ENCODE measurements at regions of chr3 and their contacts with region 1.

Region 1: GRCh38 chr3:150183678-150184425 is 213.2 kb upstream of the PFN2 start:
- DNase-seq: peak; percentile 79
- H3K4me3 ChIP-seq: peak overlapping the region; percentile 29 to 46
- H3K27ac ChIP-seq: peak overlapping the region in 1 of 2 donors; percentile 23
- H3K4me1 ChIP-seq: peaks cover 4% of the 10 kb centered on the region
- H3K27me3 ChIP-seq: no peaks in the 10 kb centered on the region
- CTCF ChIP-seq: peak; percentile 39 to 56 (median 47)
- POLR2A ChIP-seq: no peak

Region 2: DNA sequence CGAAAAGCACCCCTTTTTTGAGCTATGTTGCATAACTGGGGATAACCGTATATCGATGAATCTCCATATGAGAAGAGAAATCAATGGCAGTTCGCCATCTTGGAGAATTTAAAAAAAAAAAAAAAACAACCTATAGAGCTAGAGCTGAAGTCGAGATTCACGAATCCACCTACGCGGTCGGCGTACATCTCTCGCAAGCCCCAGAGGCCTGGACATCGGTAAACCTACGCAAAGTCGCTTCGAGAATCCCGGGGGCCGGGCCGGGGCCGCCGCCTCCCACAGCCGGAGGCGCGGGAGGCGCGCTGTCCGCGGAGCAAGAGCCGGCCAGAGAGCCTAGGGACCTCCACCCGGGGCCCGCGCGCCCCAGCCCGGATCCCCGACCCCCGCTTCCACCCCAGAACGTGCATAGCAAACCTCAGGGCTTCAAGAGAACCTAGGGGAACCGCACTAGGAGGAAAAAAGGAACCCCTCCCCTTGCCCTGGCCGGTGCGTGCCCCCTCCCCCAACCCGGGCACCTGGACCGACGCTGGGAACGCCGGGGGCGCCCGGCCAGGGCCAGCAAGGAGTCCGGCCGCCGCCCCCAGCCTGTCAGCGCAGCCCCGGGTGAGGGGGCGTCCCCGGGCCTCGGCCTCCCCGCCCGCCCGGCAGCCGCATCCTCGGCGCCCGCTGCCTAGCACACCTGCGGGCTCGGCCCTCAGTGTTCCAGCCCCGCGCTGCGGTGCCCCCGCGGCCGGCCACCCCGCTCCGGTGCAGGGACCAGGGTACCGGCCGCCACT is 213.7 kb before region 1 on chr3:
- intact Hi-C with region 1: loop called (anchors 10 kb)
- DNase-seq: peak; percentile 93
- H3K4me3 ChIP-seq: peak overlapping the region; percentile 78 to 87
- H3K27ac ChIP-seq: peak overlapping the region; percentile 90 to 94
- H3K4me1 ChIP-seq: peaks cover 5% of the 10 kb centered on the region
- H3K27me3 ChIP-seq: no peaks in the 10 kb centered on the region
- CTCF ChIP-seq: no peak
- POLR2A ChIP-seq: no peak

Region 3: GRCh38 chr3:150268426-150269391 is 84.9 kb after region 1 on chr3:
- intact Hi-C with region 1: no loop called
- DNase-seq: no peak
- H3K4me3 ChIP-seq: no peak overlapping the region
- H3K27ac ChIP-seq: no peak overlapping the region
- H3K4me1 ChIP-seq: no peaks in the 10 kb centered on the region
- H3K27me3 ChIP-seq: no peaks in the 10 kb centered on the region
- CTCF ChIP-seq: no peak
- POLR2A ChIP-seq: no peak

Measured in testis (tissue), 5 donors.